Activated CD8-positive, alpha-beta T cell treated with anti-CD3 and anti-CD28 coated beads, Interleukin-2, amount 10 ng/mL, durations not matched to agents 7 days and 5 days (primary cell): ENCODE measurements at regions of chr19 and their contacts with region 1.

Region 1: DNA sequence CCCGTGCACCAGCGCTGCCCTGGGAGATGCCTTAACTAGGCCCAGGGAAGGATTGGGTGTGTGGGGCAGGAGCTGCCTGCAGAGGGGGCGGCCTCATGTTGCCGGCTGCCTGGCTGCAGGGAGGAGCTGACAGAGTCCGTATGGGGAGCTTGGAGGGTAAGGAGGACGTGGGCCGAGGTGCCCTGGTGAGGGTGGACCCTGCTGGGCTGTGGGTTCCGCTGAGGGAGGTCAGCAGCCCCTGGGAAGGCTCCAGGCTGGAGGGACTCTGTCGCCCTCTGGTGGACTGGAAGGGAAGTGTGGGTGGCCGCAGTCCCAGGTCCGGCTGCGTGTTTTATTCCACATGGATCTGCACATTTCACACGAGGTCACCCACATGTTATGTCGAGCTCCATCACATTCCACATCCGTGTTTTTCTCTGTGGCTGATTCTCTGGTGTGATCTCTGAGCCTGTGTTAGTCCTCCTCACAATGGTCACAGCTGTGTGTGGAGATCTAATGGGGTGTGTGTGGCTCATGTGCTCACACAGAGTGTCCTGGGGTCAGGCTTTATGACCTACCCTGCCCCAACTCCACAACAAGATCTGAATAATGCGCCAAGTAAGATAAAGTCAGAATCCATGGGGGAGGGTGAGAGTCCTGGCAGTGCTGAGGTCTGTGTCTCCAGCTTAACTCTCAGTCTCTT is 1.8 kb upstream of the CEACAM8 start:
- DNase-seq: peak; percentile 40
- ATAC-seq: no peak
- H3K4me3 Mint-ChIP-seq: no peak overlapping the region
- H3K27ac Mint-ChIP-seq: no peak overlapping the region
- H3K4me1 Mint-ChIP-seq: no peaks in the 10 kb centered on the region
- H3K27me3 Mint-ChIP-seq: peaks cover 14% of the 10 kb centered on the region

Region 2: GRCh38 chr19:42512743-42513304 is 83.7 kb before region 1 on chr19:
- CTCF ChIA-PET with region 1: no interaction called
- POLR2A ChIA-PET with region 1: no interaction called
- DNase-seq: no peak
- ATAC-seq: peak; percentile 27
- H3K4me3 Mint-ChIP-seq: no peak overlapping the region
- H3K27ac Mint-ChIP-seq: peak overlapping the region; percentile 58
- H3K4me1 Mint-ChIP-seq: peaks cover 41% of the 10 kb centered on the region
- H3K27me3 Mint-ChIP-seq: no peaks in the 10 kb centered on the region

Region 3: DNA sequence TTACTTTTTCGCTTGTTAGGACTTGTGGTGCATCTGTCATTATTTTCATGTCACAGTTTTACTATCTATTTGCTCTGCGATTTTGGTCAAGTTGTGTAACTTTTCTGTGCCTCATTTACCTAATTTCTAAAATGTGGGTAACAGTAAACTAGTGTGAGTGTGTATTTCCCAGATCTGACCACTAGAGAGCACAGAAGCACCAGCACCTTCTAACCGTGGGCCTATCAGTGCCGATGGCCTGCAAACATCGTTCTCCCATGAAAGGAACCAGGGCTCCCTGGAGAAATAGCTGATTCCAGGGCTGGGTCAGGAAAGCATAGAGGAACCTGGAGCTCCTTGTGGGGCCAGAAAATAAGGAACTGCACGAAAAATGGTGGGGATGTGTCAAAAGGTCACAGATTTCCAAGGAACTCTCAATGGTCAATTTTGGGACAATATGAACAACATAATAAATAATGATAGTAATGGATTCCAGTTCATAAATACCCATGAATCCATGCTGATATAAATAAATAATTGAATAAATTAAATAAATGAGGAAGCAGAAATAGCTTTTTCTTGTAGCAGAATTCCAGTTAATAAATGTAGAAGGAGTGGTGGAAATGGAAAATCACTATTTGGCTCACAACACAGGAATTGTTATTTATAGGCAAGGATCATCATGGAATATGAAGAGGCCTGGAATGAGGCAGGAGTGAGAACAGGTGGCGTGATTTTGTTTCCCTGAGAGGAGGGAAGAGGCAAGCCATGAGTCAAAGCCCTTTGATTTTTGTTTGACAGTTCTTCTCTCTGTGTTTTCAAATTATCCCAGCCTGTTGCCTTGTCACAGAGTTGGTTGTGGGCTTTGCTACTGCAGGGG is 33.0 kb before region 1 on chr19:
- CTCF ChIA-PET with region 1: interaction called, 14 read pairs
- POLR2A ChIA-PET with region 1: interaction called, 4 read pairs
- DNase-seq: peak; percentile 47
- ATAC-seq: peak; percentile 79
- H3K4me3 Mint-ChIP-seq: no peak overlapping the region
- H3K27ac Mint-ChIP-seq: no peak overlapping the region
- H3K4me1 Mint-ChIP-seq: peaks cover 8% of the 10 kb centered on the region
- H3K27me3 Mint-ChIP-seq: peaks cover 23% of the 10 kb centered on the region

Region 4: DNA sequence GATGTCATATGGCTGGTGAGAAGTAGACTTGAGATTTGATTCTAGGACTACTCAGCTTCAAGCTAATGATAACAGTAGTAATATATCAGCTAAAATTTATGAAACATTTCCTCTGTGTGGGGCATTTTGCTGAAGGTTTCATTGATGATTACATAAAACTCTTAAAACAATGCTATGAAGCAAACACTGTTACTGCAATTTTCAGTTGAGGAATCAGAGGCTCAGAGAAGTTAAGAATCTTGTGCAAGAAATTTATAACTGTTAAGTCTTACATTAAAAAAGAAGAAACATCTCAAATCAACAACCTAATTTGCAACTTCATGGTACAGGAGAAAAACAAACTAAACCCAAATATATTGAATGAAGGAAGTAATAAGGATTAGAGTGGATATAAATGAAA is 12.1 kb before region 1 on chr19:
- CTCF ChIA-PET with region 1: interaction called, 11 read pairs
- POLR2A ChIA-PET with region 1: no interaction called
- DNase-seq: no peak
- ATAC-seq: no peak
- H3K4me3 Mint-ChIP-seq: no peak overlapping the region
- H3K27ac Mint-ChIP-seq: no peak overlapping the region
- H3K4me1 Mint-ChIP-seq: no peaks in the 10 kb centered on the region
- H3K27me3 Mint-ChIP-seq: peaks cover 27% of the 10 kb centered on the region